Activated CD8-positive, alpha-beta T cell treated with anti-CD3 and anti-CD28 coated beads for 36 hours (primary cell): ENCODE measurements at regions of chr2 and their contacts with region 1.

Region 1: DNA sequence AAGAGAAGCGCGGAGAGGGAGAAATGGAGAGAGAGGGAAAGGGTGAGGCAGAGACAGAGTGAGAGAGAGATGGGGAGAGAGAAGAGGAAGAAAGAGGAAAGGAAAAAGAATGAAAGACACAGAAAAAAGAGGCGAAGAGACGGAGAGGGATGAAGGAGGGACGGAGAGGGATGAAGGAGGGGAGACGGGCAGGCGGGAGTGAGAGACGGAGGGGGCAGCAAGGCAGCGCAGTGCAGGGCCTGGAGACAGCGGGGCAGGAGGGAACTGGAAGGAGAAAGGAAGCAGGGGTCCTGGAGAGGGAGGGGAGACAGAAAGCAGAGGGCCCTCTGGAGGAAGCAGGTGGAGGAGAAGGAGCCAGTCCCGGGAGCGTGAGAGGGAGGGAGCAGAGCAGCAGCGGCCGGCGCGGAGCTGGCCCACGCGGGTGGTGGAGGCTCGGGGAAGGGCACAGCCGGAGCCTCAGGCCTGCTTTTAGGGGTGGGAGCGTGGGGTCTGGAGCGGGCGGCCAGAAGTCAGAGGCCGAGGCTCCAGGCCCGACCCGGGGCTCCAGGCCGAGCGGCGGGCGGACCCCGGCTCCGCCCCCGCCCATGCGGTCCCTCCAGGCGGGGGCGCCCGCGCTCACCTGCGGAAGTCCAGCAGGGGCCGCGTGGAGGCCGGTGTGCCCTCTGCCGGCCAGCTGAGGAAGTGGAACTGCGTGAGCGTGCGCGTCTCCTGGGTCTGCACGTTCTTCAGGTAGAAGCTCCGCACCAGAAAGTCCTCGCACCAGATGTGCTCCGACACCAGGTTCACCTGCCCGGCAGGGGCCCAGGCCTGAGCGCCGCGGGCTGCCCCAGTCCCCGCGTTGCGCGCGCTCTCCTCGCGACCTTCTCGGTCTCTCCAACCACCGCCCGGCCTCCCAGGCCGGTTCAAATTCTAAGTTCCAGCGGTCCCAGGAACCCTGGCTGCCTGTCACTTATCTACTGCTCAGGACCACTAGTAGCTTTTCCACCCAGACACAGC is 14.5 kb downstream of the PTPRN start:
- DNase-seq: peak; percentile 90
- ATAC-seq: peak; percentile 93
- H3K4me3 Mint-ChIP-seq: peak overlapping the region; percentile 64
- H3K27ac Mint-ChIP-seq: peak overlapping the region; percentile 77
- H3K4me1 Mint-ChIP-seq: peaks cover 32% of the 10 kb centered on the region
- H3K27me3 Mint-ChIP-seq: peaks cover 3% of the 10 kb centered on the region
- CTCF ChIP-seq: peak; percentile 99

Region 2: GRCh38 chr2:219155054-219155644 is 139.5 kb before region 1 on chr2:
- CTCF ChIA-PET with region 1: interaction called, 50 read pairs
- POLR2A ChIA-PET with region 1: interaction called, 3 read pairs
- intact Hi-C with region 1: no loop called
- DNase-seq: peak; percentile 36
- ATAC-seq: peak; percentile 37
- H3K4me3 Mint-ChIP-seq: no peak overlapping the region
- H3K27ac Mint-ChIP-seq: no peak overlapping the region
- H3K4me1 Mint-ChIP-seq: peaks cover 9% of the 10 kb centered on the region
- H3K27me3 Mint-ChIP-seq: no peaks in the 10 kb centered on the region
- CTCF ChIP-seq: peak; percentile 81

Region 3: DNA sequence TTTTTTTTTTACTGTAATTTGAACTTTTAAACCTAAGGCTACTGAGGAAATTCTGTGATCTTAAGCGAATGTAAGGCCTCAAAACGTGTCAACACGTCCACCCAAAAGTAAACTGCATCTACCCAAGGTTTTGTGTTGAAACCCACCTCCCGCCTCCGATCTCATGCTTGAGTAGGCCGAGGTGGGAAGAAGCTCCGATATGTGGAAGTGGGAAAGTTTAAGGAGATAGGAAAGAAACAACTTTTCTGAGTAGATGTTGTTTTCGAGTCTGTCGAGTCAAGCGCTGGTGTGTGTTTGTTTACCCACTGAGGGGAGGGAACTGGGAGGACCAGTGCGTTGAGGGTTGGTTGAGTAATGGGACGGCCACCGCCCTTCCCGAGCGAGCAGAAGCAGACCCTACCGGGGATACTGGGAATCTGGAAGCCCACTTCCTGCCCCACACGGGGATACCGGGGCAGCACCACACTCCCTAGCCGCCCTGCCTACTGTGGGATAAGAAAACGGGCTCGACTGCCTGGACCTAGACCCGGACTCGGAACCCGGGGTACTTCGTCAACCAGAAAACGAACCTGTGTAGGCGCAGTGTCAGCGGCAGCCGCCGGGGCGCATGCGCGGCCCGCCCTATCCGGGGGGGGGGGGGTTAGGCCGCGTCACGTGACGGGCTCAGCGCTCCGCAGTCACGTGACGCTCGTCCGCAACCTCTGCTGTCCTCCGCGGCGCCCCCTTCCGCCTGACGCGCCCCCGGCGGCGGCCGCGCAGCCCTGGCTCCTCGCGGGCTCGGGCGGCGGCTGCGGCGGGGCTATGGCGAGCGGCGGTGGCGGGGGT is 116.9 kb before region 1 on chr2 and contains the start of gene RETREG2:
- CTCF ChIA-PET with region 1: interaction called, 28 read pairs
- POLR2A ChIA-PET with region 1: no interaction called
- intact Hi-C with region 1: no loop called
- DNase-seq: peak; percentile 82
- ATAC-seq: peak; percentile 46
- H3K4me3 Mint-ChIP-seq: peak within 1 kb of the TSS; percentile 97
- H3K27ac Mint-ChIP-seq: peak within 1 kb of the TSS; percentile 97
- H3K4me1 Mint-ChIP-seq: peaks cover 57% of the 10 kb centered on the region
- H3K27me3 Mint-ChIP-seq: no peaks in the 10 kb centered on the region
- CTCF ChIP-seq: peak; percentile 40
- total RNA-seq, gene RETREG2: 63.8 to 67.8 TPM

Region 4: GRCh38 chr2:219229305-219230058 is 65.2 kb before region 1 on chr2 and contains the starts of genes ANKZF1 and ATG9A:
- CTCF ChIA-PET with region 1: interaction called, 15 read pairs
- POLR2A ChIA-PET with region 1: interaction called, 11 read pairs
- intact Hi-C with region 1: loop called (anchors 5 kb)
- DNase-seq: peak; percentile 100
- ATAC-seq: peak; percentile 98
- H3K4me3 Mint-ChIP-seq: peak within 1 kb of the TSS; percentile 95
- H3K27ac Mint-ChIP-seq: peak within 1 kb of the TSS; percentile 97
- H3K4me1 Mint-ChIP-seq: peaks cover 39% of the 10 kb centered on the region
- H3K27me3 Mint-ChIP-seq: no peaks in the 10 kb centered on the region
- CTCF ChIP-seq: no peak
- total RNA-seq, gene ANKZF1: 216 to 217 TPM
- total RNA-seq, gene ATG9A: 54.8 to 58.7 TPM

Region 5: DNA sequence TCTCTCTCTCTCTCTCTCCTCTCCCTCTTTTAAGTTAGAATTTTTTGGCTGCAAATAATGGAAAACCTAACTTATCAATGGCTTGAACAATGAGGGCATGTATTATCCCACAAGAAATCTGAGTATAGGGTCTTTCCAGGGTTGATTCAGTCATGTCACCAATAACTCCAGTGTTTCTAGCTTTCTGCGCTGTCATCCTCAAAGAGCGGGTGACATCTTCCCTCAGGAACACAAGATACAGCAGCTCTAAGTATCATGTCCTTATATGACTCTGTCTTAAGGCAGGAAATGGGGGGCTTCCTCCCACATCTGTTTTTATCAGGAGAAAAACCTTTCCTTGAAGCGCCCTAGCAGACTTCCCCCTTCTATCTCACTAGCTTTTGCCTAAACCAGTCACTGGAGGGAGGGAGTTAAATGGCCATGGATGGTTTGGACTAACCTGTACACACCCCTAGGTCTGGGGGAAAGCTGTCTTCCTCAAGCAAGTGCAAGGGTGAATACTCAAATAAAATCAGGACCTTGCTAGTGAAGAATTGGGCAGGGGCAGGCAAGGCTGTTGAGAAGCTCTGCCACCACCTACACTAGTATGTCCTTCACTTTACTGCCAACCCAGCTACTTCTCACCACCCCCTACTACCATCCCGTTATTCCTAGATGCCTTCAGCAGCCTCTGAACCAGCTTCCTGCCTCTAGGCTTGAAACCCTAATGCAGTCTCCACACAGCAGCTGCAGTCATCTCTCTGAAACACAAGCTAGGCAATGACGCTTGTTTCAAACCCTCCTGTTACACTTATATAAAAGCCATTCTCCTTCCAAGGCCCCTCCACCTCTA is 33.4 kb before region 1 on chr2:
- CTCF ChIA-PET with region 1: interaction called, 48 read pairs
- POLR2A ChIA-PET with region 1: no interaction called
- intact Hi-C with region 1: no loop called
- DNase-seq: no peak
- ATAC-seq: peak; percentile 26
- H3K4me3 Mint-ChIP-seq: no peak overlapping the region
- H3K27ac Mint-ChIP-seq: no peak overlapping the region
- H3K4me1 Mint-ChIP-seq: peaks cover 11% of the 10 kb centered on the region
- H3K27me3 Mint-ChIP-seq: peaks cover 1% of the 10 kb centered on the region
- CTCF ChIP-seq: no peak

Region 6: DNA sequence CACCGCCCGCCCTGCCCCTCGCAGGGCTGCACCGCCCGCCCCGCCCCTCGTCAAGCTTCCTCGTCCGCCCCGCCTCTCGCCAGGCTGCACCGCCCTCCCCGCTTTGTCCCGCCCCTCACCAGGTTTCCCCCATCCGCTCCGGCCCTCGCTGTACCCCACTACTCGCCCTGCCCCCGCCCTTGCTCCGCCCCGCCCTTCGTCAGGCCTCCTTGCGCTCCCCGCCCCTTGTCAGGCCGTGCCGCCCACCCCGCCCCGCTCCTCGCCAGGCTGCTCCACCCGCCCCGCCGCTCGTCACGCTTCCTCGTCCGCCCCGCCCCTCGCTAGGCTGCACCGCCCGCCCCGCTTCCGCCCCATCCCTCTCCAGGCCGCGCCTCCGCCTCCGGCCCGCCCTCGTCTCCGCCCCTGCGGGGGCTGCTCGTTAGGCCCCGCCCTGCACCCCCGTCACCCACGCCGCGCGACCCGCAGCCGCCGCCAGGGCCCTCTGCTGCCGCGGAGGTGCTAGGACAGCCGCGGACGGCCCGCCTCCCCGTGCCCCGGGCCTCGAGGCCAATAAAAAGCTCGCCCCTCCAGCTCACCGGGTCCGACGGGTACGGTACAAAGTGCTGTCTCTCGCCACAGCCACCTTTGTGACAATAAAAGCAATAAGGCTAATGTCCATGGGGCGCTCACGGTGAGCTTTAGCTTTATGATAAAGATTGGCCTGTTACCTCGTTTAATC is 93.6 kb after region 1 on chr2:
- CTCF ChIA-PET with region 1: interaction called, 13 read pairs
- POLR2A ChIA-PET with region 1: no interaction called
- intact Hi-C with region 1: no loop called
- DNase-seq: peak; percentile 99
- ATAC-seq: peak; percentile 81
- H3K4me3 Mint-ChIP-seq: peak overlapping the region; percentile 72
- H3K27ac Mint-ChIP-seq: peak overlapping the region; percentile 85
- H3K4me1 Mint-ChIP-seq: peaks cover 21% of the 10 kb centered on the region
- H3K27me3 Mint-ChIP-seq: no peaks in the 10 kb centered on the region
- CTCF ChIP-seq: peak; percentile 58